ENCODE measurements at regions of chr14 and their contacts with region 1.

Region 1: GRCh38 chr14:24817212-24818057 is 183.4 kb upstream of the GZMB start:
- DNase-seq: no peak
- H3K4me3 ChIP-seq: no peak overlapping the region
- H3K27ac ChIP-seq: peak overlapping the region in 2 of 3 donors; percentile 37 to 84
- H3K4me1 ChIP-seq: peaks cover 27 to 30% of the 10 kb centered on the region in 2 donors
- H3K27me3 ChIP-seq: no peaks in the 10 kb centered on the region
- CTCF ChIP-seq: peak in 1 of 6 experiments; percentile 14
- POLR2A ChIP-seq: no peak

Region 2: GRCh38 chr14:24875991-24876878 is 58.8 kb after region 1 on chr14:
- intact Hi-C with region 1: no loop called
- DNase-seq: no peak
- H3K4me3 ChIP-seq: no peak overlapping the region
- H3K27ac ChIP-seq: no peak overlapping the region
- H3K4me1 ChIP-seq: peaks cover 0 to 15% of the 10 kb centered on the region in 2 donors
- H3K27me3 ChIP-seq: no peaks in the 10 kb centered on the region
- CTCF ChIP-seq: no peak
- POLR2A ChIP-seq: no peak

Region 3: DNA sequence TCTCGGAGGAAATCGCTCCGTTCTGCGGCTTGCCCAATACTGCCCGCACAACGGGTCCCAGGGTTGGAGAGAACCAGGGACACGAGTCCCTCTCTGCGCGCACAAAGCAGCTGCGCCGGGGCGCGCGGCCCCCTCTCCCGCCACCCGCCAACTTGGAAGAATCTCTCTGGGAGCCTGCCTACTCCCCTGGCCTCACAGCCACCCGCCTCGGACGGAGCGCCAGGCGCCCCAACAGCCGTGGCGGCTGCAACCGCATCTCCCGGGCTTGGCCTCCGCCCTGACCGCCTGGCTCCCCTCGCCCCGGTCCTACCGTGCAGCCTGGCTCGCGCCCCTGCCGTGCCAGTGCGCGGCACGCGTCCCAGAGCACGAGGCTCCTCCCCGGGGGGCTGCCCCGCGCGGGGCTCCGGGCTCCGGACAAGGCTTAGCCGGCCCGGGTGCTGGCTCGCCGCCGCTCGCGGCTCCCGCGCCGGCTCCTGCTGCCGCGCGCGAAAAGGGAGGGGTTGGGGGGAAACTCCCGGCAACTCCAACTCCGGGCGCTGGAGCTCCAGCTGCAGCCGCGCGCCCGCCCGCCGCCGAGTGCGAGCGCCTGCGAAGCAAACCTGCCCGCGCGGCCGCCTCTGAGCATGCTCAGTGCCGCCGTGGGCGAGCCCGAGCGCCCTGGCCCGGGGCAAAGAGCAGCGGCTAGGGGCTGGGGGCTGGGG is 232.3 kb after region 1 on chr14 and contains the start of gene STXBP6:
- intact Hi-C with region 1: loop called (anchors 10 kb)
- DNase-seq: peak; percentile 86 to 87
- H3K4me3 ChIP-seq: peak within 1 kb of the TSS; percentile 72 to 81 (median 77)
- H3K27ac ChIP-seq: peak within 1 kb of the TSS; percentile 70 to 95 (median 86)
- H3K4me1 ChIP-seq: peaks cover 25 to 26% of the 10 kb centered on the region in 2 donors
- H3K27me3 ChIP-seq: no peaks in the 10 kb centered on the region
- CTCF ChIP-seq: no peak
- POLR2A ChIP-seq: peak in 1 of 2 donors; percentile 80
- total RNA-seq, gene STXBP6: 44.1 to 120 (median 67.4) TPM